PC-3 (cell line): ENCODE measurements at regions of chr14 and their contacts with region 1.

Region 1: GRCh38 chr14:105473677-105474482 is 741 bp upstream of the CRIP2 start:
- DNase-seq: peak; percentile 89
- ATAC-seq: peak; percentile 50
- H3K4me3 ChIP-seq: peak overlapping the region; percentile 74
- H3K27ac ChIP-seq: peak overlapping the region; percentile 64
- H3K4me1 ChIP-seq: peaks cover 37% of the 10 kb centered on the region
- H3K27me3 ChIP-seq: no peaks in the 10 kb centered on the region
- CTCF ChIP-seq: no peak

Region 2: GRCh38 chr14:105430535-105430934 is 43.3 kb before region 1 on chr14:
- CTCF ChIA-PET with region 1: no interaction called
- POLR2A ChIA-PET with region 1: no interaction called
- intact Hi-C with region 1: loop called (anchors 2 kb)
- DNase-seq: peak; percentile 97
- ATAC-seq: peak; percentile 90
- H3K4me3 ChIP-seq: no peak overlapping the region; the same call in 1 of the 2 replicates
- H3K27ac ChIP-seq: peak overlapping the region; percentile 36; the same call in 1 of the 2 replicates
- H3K4me1 ChIP-seq: peaks cover 17% of the 10 kb centered on the region
- H3K27me3 ChIP-seq: no peaks in the 10 kb centered on the region
- CTCF ChIP-seq: no peak

Region 3: GRCh38 chr14:106174206-106174605 is 700.3 kb after region 1 on chr14:
- CTCF ChIA-PET with region 1: no interaction called
- POLR2A ChIA-PET with region 1: no interaction called
- intact Hi-C with region 1: no loop called
- DNase-seq: no peak
- ATAC-seq: no peak
- H3K4me3 ChIP-seq: no peak overlapping the region
- H3K27ac ChIP-seq: no peak overlapping the region
- H3K4me1 ChIP-seq: no peaks in the 10 kb centered on the region
- H3K27me3 ChIP-seq: no peaks in the 10 kb centered on the region
- CTCF ChIP-seq: no peak